Gastrocnemius medialis (tissue), 4 donors: ENCODE measurements at regions of chr12 and their contacts with region 1.

Region 1: DNA sequence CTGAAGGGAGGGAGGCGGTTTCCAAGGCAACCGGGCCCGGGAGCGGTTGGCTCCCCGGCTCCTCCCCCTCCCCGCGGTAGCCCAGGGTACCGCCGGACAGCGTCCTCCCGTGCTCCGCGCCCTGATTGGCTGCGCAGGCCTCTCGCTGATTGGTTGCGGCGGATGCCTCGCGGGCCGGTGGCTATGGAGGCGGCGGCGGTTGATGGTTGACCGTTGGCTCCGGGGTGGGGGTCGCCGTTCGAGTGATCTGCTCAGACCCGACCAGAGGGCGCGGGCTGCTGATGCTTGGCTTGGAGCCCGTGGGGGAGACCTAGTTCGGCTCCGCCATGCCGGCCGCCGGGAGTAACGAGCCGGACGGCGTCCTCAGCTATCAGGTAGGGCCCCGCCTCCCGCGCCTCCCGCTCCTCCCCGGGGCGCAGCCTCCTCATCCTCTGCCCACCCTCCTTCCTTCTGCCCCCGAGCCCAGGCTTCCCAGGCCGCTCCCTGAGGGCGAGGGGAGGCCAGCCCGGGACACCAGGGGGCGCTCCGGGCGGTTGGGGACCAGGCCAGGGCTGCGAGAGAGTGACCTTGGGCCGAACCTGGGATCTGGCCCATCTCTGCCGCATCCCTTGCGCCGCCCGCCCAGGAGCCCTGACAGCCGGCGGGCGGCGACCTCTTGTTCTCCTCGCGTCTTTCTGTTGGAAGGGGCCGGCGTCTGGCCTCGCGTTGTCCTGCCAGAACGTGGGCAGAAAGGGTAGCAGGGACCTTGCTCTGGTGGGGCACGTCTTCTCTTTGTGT is at the start of gene SLC4A8:
- DNase-seq: peak; percentile 9 to 21
- ATAC-seq: peak in 1 of 2 donors; percentile 30
- H3K4me3 ChIP-seq: peak within 1 kb of the TSS; percentile 29 to 61 (median 48)
- H3K27ac ChIP-seq: no peak within 1 kb of the TSS
- H3K4me1 ChIP-seq: peaks cover 0 to 3% of the 10 kb centered on the region in 2 donors
- H3K27me3 ChIP-seq: peaks cover 21 to 35% (median 23%) of the 10 kb centered on the region in 3 donors
- CTCF ChIP-seq: peak; percentile 20 to 60 (median 45)
- POLR2A ChIP-seq: no peak
- total RNA-seq, gene SLC4A8: 0.05 TPM in 1 of 4 donors, not detected in the others

Region 2: DNA sequence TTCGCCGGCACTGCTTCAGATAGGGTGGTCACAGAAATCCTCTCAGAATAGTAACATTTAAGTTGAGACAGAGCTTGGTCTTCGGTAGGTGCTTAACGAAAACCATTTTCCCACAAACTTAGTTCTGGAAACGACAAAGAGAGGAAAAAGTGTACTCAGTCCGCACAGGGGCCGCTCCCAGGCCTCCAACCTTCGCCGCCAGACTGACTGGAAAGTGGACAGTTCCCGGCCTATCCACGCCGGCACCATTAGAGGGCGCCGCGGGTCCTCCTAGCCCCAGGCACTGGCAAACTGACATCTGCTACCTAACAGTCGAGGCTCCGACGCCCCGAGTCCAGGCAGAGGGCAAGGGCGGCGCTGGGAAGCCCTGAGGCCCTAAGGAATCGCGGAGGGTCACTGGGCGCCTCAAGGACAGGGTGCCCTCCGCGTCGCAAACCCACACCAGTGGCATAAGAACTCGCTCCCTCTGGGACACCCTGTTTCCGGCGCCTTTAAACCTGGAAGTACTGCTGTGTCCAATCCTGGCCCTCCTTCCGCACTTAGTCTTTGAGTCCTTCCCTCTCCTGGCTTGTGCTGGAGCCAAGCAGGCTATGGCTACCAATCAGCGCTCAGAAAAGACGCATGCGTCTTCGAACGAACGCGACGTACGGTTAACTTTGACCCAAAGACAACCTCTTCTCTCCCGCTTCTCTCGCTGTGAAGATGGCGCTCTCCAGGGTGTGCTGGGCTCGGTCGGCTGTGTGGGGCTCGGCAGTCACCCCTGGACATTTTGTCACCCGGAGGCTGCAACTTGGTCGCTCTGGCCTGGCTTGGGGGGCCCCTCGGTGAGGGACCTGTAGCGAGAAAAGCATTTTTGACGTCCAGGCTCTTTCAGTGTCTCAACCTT is 377.0 kb before region 1 on chr12 and contains the start of gene LETMD1:
- in situ Hi-C with region 1: no loop called
- intact Hi-C with region 1: no loop called
- DNase-seq: peak; percentile 97 to 98
- ATAC-seq: peak; percentile 99
- H3K4me3 ChIP-seq: peak within 1 kb of the TSS; percentile 79 to 95 (median 81)
- H3K27ac ChIP-seq: peak within 1 kb of the TSS; percentile 88 to 99 (median 98)
- H3K4me1 ChIP-seq: peaks cover 22 to 30% of the 10 kb centered on the region in 2 donors
- H3K27me3 ChIP-seq: no peaks in the 10 kb centered on the region
- CTCF ChIP-seq: peak; percentile 87 to 98 (median 92)
- POLR2A ChIP-seq: peak; percentile 77 to 79
- total RNA-seq, gene LETMD1: 22.5 to 42.4 (median 29.8) TPM

Region 3: GRCh38 chr12:51531978-51532497 is 107.2 kb after region 1 on chr12:
- in situ Hi-C with region 1: loop called in 2 of 4 experiments (anchors 5 kb)
- intact Hi-C with region 1: loop called (anchors 2 kb)
- DNase-seq: peak; percentile 15 to 44
- ATAC-seq: peak; percentile 82 to 83
- H3K4me3 ChIP-seq: no peak overlapping the region
- H3K27ac ChIP-seq: no peak overlapping the region
- H3K4me1 ChIP-seq: no peaks in the 10 kb centered on the region
- H3K27me3 ChIP-seq: peaks cover 0 to 8% (median 3%) of the 10 kb centered on the region in 3 donors
- CTCF ChIP-seq: peak; percentile 48 to 85 (median 66)
- POLR2A ChIP-seq: no peak

Region 4: GRCh38 chr12:51639361-51639760 is 214.5 kb after region 1 on chr12:
- in situ Hi-C with region 1: no loop called
- intact Hi-C with region 1: no loop called
- DNase-seq: no peak
- ATAC-seq: no peak
- H3K4me3 ChIP-seq: no peak overlapping the region
- H3K27ac ChIP-seq: no peak overlapping the region
- H3K4me1 ChIP-seq: no peaks in the 10 kb centered on the region
- H3K27me3 ChIP-seq: no peaks in the 10 kb centered on the region
- CTCF ChIP-seq: no peak
- POLR2A ChIP-seq: no peak

Region 5: GRCh38 chr12:51814311-51815088 is 389.6 kb after region 1 on chr12:
- in situ Hi-C with region 1: loop called in 1 of 4 experiments (anchors 25 kb)
- intact Hi-C with region 1: no loop called
- DNase-seq: peak in 1 of 2 donors; percentile 27
- ATAC-seq: peak; percentile 75 to 77
- H3K4me3 ChIP-seq: peak overlapping the region; percentile 55 to 61 (median 58)
- H3K27ac ChIP-seq: peak overlapping the region; percentile 49 to 80 (median 68)
- H3K4me1 ChIP-seq: no peaks in the 10 kb centered on the region
- H3K27me3 ChIP-seq: peaks cover 0 to 15% (median 12%) of the 10 kb centered on the region in 3 donors
- CTCF ChIP-seq: peak in 4 of 5 experiments; percentile 45 to 67 (median 58)
- POLR2A ChIP-seq: no peak

Region 6: GRCh38 chr12:51823875-51824565 is 399.2 kb after region 1 on chr12:
- in situ Hi-C with region 1: loop called in 1 of 4 experiments (anchors 25 kb)
- intact Hi-C with region 1: loop called (anchors 10 kb)
- DNase-seq: no peak
- ATAC-seq: no peak
- H3K4me3 ChIP-seq: no peak overlapping the region
- H3K27ac ChIP-seq: no peak overlapping the region
- H3K4me1 ChIP-seq: no peaks in the 10 kb centered on the region
- H3K27me3 ChIP-seq: peaks cover 0 to 10% (median 8%) of the 10 kb centered on the region in 3 donors
- CTCF ChIP-seq: peak in 1 of 5 experiments; percentile 29
- POLR2A ChIP-seq: no peak